HCT116 (cell line): ENCODE measurements at regions of chr12 and their contacts with region 1.

Region 1: GRCh38 chr12:20183563-20183962 is 184.8 kb upstream of the PDE3A start:
- DNase-seq: no peak
- ATAC-seq: no peak
- H3K4me3 ChIP-seq: no peak overlapping the region
- H3K27ac ChIP-seq: no peak overlapping the region
- H3K4me1 ChIP-seq: no peaks in the 10 kb centered on the region
- H3K27me3 ChIP-seq: no peaks in the 10 kb centered on the region
- CTCF ChIP-seq: no peak
- POLR2A ChIP-seq: no peak
- RAD21 ChIP-seq: no peak

Region 2: DNA sequence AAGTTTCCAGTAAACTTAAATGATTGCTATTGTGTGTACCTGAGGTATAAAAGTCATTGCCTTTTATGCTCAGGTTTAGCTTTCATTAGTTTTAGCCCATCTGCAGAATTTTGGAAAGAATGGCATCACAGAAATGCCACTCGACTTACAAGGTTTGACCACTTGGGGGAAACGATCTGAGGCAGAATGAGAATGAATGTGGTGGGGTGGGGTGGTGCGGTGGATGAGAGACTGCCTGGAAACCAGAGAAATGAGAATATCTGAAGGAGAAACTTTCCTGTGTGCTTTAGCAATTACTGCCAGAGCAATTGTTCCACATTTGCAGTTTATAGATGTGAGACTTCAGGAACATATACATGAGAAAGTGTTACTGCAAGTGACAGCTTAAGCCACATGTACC is 40.6 kb before region 1 on chr12:
- CTCF ChIA-PET with region 1: no interaction called
- POLR2A ChIA-PET with region 1: no interaction called
- RAD21 ChIA-PET with region 1: no interaction called
- intact Hi-C with region 1: loop called (anchors 1 kb)
- DNase-seq: no peak
- ATAC-seq: peak; percentile 52; the same call in 1 of the 2 replicates
- H3K4me3 ChIP-seq: no peak overlapping the region
- H3K27ac ChIP-seq: no peak overlapping the region
- H3K4me1 ChIP-seq: no peaks in the 10 kb centered on the region
- H3K27me3 ChIP-seq: 0 out of 2 replicates have a peak, but pooled peaks cover 3% of the 10 kb centered on the region
- CTCF ChIP-seq: peak in 2 of 3 experiments; percentile 19 to 36; a peak in 2 of 6 replicates
- POLR2A ChIP-seq: no peak
- RAD21 ChIP-seq: no peak